Caco-2 (cell line): ENCODE measurements at regions of chr4 and their contacts with region 1.

Region 1: GRCh38 chr4:168028568-168028967 is 63.8 kb upstream of the ANXA10 start:
- DNase-seq: no peak
- H3K4me3 ChIP-seq: no peak overlapping the region
- H3K4me3 Mint-ChIP-seq: no peak overlapping the region
- H3K27ac Mint-ChIP-seq: no peak overlapping the region
- H3K4me1 ChIP-seq: no peaks in the 10 kb centered on the region
- H3K4me1 Mint-ChIP-seq: no peaks in the 10 kb centered on the region
- H3K27me3 ChIP-seq: no peaks in the 10 kb centered on the region
- H3K27me3 Mint-ChIP-seq: no peaks in the 10 kb centered on the region
- CTCF ChIP-seq: no peak

Region 2: GRCh38 chr4:168153596-168154440 is 125.2 kb after region 1 on chr4:
- CTCF ChIA-PET with region 1: no interaction called
- POLR2A ChIA-PET with region 1: no interaction called
- intact Hi-C with region 1: loop called (anchors 2 kb)
- DNase-seq: peak; percentile 55 to 59
- H3K4me3 ChIP-seq: no peak overlapping the region
- H3K4me3 Mint-ChIP-seq: no peak overlapping the region
- H3K27ac Mint-ChIP-seq: no peak overlapping the region
- H3K4me1 ChIP-seq: no peaks in the 10 kb centered on the region
- H3K4me1 Mint-ChIP-seq: no peaks in the 10 kb centered on the region
- H3K27me3 ChIP-seq: no peaks in the 10 kb centered on the region
- H3K27me3 Mint-ChIP-seq: peaks cover 3% of the 10 kb centered on the region
- CTCF ChIP-seq: peak; percentile 54 to 60